ENCODE measurements at regions of chr12 and their contacts with region 1.

Region 1: DNA sequence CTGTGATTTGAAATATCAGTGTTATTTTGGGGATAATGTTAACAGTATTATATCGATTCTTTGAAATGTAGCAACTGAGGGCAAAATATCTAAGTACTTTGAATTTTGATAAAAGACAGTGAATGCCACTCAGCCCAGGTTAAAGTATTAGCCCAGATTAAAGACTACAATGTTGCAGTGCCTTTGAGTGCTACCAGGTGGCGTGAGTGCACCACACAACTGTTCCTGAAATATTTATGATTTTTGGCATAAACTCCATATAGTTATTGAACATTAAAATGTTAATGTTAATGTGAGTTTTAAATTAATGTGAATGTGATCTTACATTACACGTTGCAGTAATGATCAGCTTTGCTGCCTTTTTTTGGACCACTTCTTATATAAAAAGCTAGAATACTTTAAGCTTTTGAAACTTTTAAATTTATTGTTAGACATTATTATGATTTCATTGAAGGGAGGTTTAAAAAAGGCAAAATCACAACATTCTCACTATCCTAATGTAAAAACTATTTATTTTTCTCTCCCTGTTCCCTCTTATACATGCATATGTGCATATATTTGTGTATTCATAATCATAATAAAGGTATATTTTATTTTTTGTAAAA is 22.5 kb downstream of the MRPS35 start:
- DNase-seq: no peak
- H3K4me3 ChIP-seq: no peak overlapping the region
- H3K27me3 ChIP-seq: no peaks in the 10 kb centered on the region
- CTCF ChIP-seq: peak; percentile 85

Region 2: GRCh38 chr12:27710592-27711316 is 22.4 kb before region 1 on chr12 and contains the start of gene MRPS35:
- CTCF ChIA-PET with region 1: no interaction called
- POLR2A ChIA-PET with region 1: no interaction called
- DNase-seq: peak; percentile 53
- H3K4me3 ChIP-seq: peak within 1 kb of the TSS; percentile 63
- H3K27me3 ChIP-seq: no peaks in the 10 kb centered on the region
- CTCF ChIP-seq: no peak
- polyA plus RNA-seq, gene MRPS35: 45.8 and 52.1 TPM in 2 replicates

Region 3: DNA sequence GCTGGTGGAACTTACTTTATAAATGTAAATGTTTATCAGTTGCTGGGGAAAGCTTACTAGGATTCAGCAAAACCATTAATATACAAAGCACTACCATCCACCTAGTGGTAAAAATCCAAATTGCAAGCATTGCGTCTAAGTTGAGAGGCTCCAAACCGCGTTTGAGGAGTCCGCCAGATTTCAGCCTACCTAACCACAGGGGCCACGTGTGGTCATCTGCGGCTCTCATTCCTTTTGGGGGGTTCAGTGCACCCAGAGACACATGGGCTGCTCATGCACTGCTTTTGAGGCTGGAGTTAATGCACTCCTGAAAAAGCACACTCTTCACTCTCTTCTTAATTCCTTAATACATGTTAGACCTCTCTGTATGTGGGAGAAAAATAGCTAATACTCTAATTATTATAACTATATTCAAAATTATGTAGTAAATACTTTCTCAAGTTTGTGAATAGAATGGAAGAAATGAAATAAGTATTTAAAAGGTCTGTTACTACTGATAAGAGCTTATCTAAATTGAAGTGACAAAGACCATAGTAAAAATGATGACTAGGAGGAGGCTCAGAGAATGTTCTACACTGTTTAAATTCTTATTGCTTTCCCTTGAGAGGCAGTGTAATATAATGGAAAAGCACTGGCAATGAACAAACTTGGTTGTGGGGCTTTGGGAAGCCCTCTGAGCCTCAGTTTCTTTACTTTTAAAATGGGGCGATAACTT is 88.3 kb after region 1 on chr12:
- CTCF ChIA-PET with region 1: interaction called, 16 read pairs
- POLR2A ChIA-PET with region 1: no interaction called
- DNase-seq: peak; percentile 27
- H3K4me3 ChIP-seq: no peak overlapping the region
- H3K27me3 ChIP-seq: no peaks in the 10 kb centered on the region
- CTCF ChIP-seq: peak; percentile 77

Region 4: GRCh38 chr12:27940756-27941402 is 207.7 kb after region 1 on chr12:
- CTCF ChIA-PET with region 1: interaction called, 21 read pairs
- POLR2A ChIA-PET with region 1: interaction called, 3 read pairs
- DNase-seq: no peak
- H3K4me3 ChIP-seq: no peak overlapping the region
- H3K27me3 ChIP-seq: no peaks in the 10 kb centered on the region
- CTCF ChIP-seq: peak; percentile 86

Measured in BJ (cell line).